CD8-positive, alpha-beta T cell (primary cell): ENCODE measurements at regions of chr10 and their contacts with region 1.

Region 1: GRCh38 chr10:11113156-11113555 is 95.5 kb downstream of the CELF2 start:
- DNase-seq: peak in 6 of 9 experiments; percentile 11 to 76 (median 38)
- ATAC-seq: peak; percentile 98
- H3K4me3 ChIP-seq: no peak overlapping the region
- H3K4me3 Mint-ChIP-seq: peak overlapping the region; percentile 49
- H3K27ac ChIP-seq: no peak overlapping the region
- H3K27ac Mint-ChIP-seq: peak overlapping the region; percentile 73
- H3K4me1 ChIP-seq: peaks cover 10% of the 10 kb centered on the region
- H3K4me1 Mint-ChIP-seq: peaks cover 18% of the 10 kb centered on the region
- H3K27me3 ChIP-seq: no peaks in the 10 kb centered on the region
- H3K27me3 Mint-ChIP-seq: no peaks in the 10 kb centered on the region
- CTCF ChIP-seq: peak; percentile 88

Region 2: GRCh38 chr10:11145495-11145855 is 32.3 kb after region 1 on chr10:
- CTCF ChIA-PET with region 1: interaction called, 17 read pairs
- POLR2A ChIA-PET with region 1: interaction called, 7 read pairs
- intact Hi-C with region 1: loop called (anchors 1 to 2 kb)
- DNase-seq: peak in 8 of 9 experiments; percentile 61 to 90 (median 78)
- ATAC-seq: peak; percentile 62
- H3K4me3 ChIP-seq: peak overlapping the region; percentile 18 to 30
- H3K4me3 Mint-ChIP-seq: peak overlapping the region; percentile 66
- H3K27ac ChIP-seq: peak overlapping the region; percentile 53 to 88
- H3K27ac Mint-ChIP-seq: peak overlapping the region; percentile 95
- H3K4me1 ChIP-seq: peaks cover 96% of the 10 kb centered on the region
- H3K4me1 Mint-ChIP-seq: peaks cover 97% of the 10 kb centered on the region
- H3K27me3 ChIP-seq: no peaks in the 10 kb centered on the region
- H3K27me3 Mint-ChIP-seq: no peaks in the 10 kb centered on the region
- CTCF ChIP-seq: no peak

Region 3: GRCh38 chr10:11178606-11179515 is 65.7 kb after region 1 on chr10:
- CTCF ChIA-PET with region 1: interaction called, 8 read pairs
- POLR2A ChIA-PET with region 1: interaction called, 5 read pairs
- intact Hi-C with region 1: loop called in 1 of 2 experiments (anchors 5 kb)
- DNase-seq: peak; percentile 66 to 96 (median 85)
- ATAC-seq: peak; percentile 70
- H3K4me3 ChIP-seq: peak overlapping the region; percentile 25 to 40
- H3K4me3 Mint-ChIP-seq: no peak overlapping the region
- H3K27ac ChIP-seq: peak overlapping the region; percentile 48 to 79
- H3K27ac Mint-ChIP-seq: no peak overlapping the region
- H3K4me1 ChIP-seq: peaks cover 100% of the 10 kb centered on the region
- H3K4me1 Mint-ChIP-seq: peaks cover under 1% of the 10 kb centered on the region
- H3K27me3 ChIP-seq: no peaks in the 10 kb centered on the region
- H3K27me3 Mint-ChIP-seq: no peaks in the 10 kb centered on the region
- CTCF ChIP-seq: no peak

Region 4: GRCh38 chr10:11225935-11226334 is 112.8 kb after region 1 on chr10:
- CTCF ChIA-PET with region 1: interaction called, 10 read pairs
- POLR2A ChIA-PET with region 1: no interaction called
- intact Hi-C with region 1: no loop called
- DNase-seq: peak in 7 of 9 experiments; percentile 37 to 88 (median 61)
- ATAC-seq: peak; percentile 69
- H3K4me3 ChIP-seq: peak overlapping the region in 1 of 2 experiments; percentile 13
- H3K4me3 Mint-ChIP-seq: peak overlapping the region; percentile 69
- H3K27ac ChIP-seq: peak overlapping the region; percentile 41 to 78
- H3K27ac Mint-ChIP-seq: peak overlapping the region; percentile 98
- H3K4me1 ChIP-seq: peaks cover 75% of the 10 kb centered on the region
- H3K4me1 Mint-ChIP-seq: peaks cover 93% of the 10 kb centered on the region
- H3K27me3 ChIP-seq: no peaks in the 10 kb centered on the region
- H3K27me3 Mint-ChIP-seq: no peaks in the 10 kb centered on the region
- CTCF ChIP-seq: no peak

Region 5: DNA sequence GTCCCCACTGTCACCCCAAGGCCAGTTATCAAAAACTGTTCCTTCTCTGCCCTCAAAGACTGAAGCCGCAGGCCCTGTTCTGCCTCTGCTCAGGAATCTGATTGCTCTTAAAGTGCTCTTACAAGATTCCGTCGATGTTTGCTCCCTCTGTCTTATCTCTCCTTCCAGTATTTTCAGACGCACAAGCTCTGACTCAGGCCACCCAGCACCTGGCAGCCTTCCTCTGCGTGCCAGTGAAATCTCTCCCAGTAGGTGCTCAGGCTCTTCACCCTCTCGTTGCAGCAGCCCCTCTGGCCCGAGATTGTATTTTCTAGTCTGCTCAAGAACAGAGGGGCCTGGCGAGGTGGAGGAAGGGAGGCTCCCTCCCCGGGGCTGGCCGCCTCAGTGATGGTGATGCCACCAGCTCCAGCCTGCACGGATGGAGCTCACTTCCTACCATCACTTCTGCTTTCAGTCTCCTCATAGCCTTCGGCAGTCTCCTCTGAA is 222.1 kb after region 1 on chr10:
- CTCF ChIA-PET with region 1: interaction called, 3 read pairs
- POLR2A ChIA-PET with region 1: no interaction called
- intact Hi-C with region 1: loop called in 1 of 2 experiments (anchors 10 kb)
- DNase-seq: peak in 1 of 9 experiments; percentile 48
- ATAC-seq: no peak
- H3K4me3 ChIP-seq: no peak overlapping the region
- H3K4me3 Mint-ChIP-seq: no peak overlapping the region
- H3K27ac ChIP-seq: no peak overlapping the region
- H3K27ac Mint-ChIP-seq: peak overlapping the region; percentile 80
- H3K4me1 ChIP-seq: peaks cover 14% of the 10 kb centered on the region
- H3K4me1 Mint-ChIP-seq: peaks cover 47% of the 10 kb centered on the region
- H3K27me3 ChIP-seq: no peaks in the 10 kb centered on the region
- H3K27me3 Mint-ChIP-seq: no peaks in the 10 kb centered on the region
- CTCF ChIP-seq: no peak